Naive thymus-derived CD4-positive, alpha-beta T cell (primary cell): ENCODE measurements at regions of chr3 and their contacts with region 1.

Region 1: GRCh38 chr3:188914552-188914951 is 257.2 kb upstream of the TPRG1 start:
- DNase-seq: no peak
- ATAC-seq: peak; percentile 70
- H3K4me3 ChIP-seq: no peak overlapping the region
- H3K4me3 Mint-ChIP-seq: peak overlapping the region in 1 of 10 donors; percentile 41
- H3K27ac ChIP-seq: no peak overlapping the region
- H3K27ac Mint-ChIP-seq: peak overlapping the region in 2 of 9 donors; percentile 28 to 34
- H3K4me1 ChIP-seq: peaks cover 16 to 18% of the 10 kb centered on the region in 2 donors
- H3K4me1 Mint-ChIP-seq: peaks cover 21 to 42% (median 32%) of the 10 kb centered on the region in 7 donors
- H3K27me3 ChIP-seq: no peaks in the 10 kb centered on the region
- H3K27me3 Mint-ChIP-seq: no peaks in the 10 kb centered on the region

Region 2: DNA sequence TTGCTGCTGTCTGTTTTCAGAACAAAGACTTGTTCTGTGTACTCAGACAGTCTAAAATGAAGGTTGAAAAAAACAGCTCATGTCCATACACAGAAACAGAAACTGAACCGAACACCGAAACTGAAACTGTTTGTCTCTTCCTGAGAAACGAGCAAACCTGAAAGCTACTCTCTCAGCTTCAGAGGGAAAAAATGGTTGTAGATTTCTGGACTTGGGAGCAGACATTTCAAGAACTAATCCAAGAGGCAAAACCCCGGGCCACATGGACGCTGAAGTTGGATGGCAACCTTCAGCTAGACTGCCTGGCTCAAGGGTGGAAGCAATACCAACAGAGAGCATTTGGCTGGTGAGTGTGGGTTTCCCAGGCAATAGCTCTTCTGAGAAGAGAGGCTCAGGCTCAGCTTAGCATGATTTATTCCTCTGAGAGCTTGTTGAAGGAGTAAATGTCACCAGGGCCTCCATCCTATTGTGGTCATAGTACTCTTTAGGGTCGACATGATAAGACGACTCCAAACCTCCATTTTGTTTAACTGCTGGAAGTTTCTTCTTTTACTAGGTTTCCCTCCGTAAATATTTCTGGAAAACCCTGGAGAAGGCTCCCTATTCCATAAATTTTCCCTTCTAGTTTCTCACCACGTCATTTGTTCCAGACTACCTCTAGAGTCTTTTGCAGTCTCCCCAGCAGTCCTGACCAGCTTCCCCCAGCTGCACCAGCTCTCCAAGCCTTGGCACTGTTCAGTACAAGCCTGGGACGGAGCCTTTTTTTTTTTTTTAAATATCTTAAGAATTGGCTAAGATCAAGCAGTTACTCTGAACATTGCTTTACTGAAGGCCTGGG is 1546.1 kb before region 1 on chr3 and contains the start of gene RTP4:
- CTCF ChIA-PET with region 1: no interaction called
- POLR2A ChIA-PET with region 1: no interaction called
- intact Hi-C with region 1: loop called in 1 of 2 experiments (anchors 5 kb)
- DNase-seq: peak in 8 of 9 donors; percentile 25 to 70 (median 55)
- ATAC-seq: peak; percentile 86
- H3K4me3 ChIP-seq: peak within 1 kb of the TSS; percentile 85
- H3K4me3 Mint-ChIP-seq: peak within 1 kb of the TSS; percentile 89 to 100 (median 98)
- H3K27ac ChIP-seq: peak within 1 kb of the TSS; percentile 78
- H3K27ac Mint-ChIP-seq: peak within 1 kb of the TSS; percentile 94 to 100 (median 98)
- H3K4me1 ChIP-seq: peaks cover 9 to 13% of the 10 kb centered on the region in 2 donors
- H3K4me1 Mint-ChIP-seq: peaks cover 22 to 42% (median 29%) of the 10 kb centered on the region in 7 donors
- H3K27me3 ChIP-seq: no peaks in the 10 kb centered on the region
- H3K27me3 Mint-ChIP-seq: no peaks in the 10 kb centered on the region
- total RNA-seq, gene RTP4: 1.6 to 23.1 (median 5.5) TPM

Region 3: DNA sequence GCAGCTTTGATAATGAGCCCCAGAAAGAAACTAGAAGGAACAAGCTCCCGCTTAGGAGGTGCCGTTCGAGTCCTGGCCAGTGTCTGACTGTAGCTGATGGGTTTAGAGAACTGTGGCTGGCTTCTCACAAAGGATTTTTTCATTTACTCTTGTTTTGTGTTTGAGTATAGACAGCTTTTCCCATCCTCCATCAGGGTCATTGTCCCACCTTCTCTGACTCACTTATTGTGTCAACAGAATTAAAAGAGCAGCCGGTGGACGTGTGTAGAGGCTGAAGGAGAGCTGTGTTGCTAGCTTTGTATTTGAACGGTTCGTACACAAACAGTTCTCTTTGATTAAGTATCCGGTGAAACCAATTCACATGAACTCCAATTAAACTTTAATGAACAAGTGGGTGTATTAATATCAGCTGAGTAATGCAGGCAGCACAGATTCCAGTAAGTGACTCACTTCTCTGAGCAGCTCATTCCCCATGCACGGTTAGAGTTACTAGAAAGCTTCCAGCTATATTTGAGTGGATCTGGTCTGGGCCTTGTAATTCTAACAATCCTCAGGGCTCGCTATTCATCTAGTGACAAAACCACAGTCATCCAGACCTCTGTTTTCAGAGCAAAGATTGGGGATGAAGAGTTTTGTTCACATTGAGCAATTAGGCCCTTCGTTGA is 619.6 kb before region 1 on chr3:
- CTCF ChIA-PET with region 1: no interaction called
- POLR2A ChIA-PET with region 1: no interaction called
- intact Hi-C with region 1: loop called in 1 of 2 experiments (anchors 10 kb)
- DNase-seq: no peak
- ATAC-seq: no peak
- H3K4me3 ChIP-seq: no peak overlapping the region
- H3K4me3 Mint-ChIP-seq: no peak overlapping the region
- H3K27ac ChIP-seq: no peak overlapping the region
- H3K27ac Mint-ChIP-seq: no peak overlapping the region
- H3K4me1 ChIP-seq: peaks cover 4 to 6% of the 10 kb centered on the region in 2 donors
- H3K4me1 Mint-ChIP-seq: peaks cover 8 to 62% (median 27%) of the 10 kb centered on the region in 7 donors
- H3K27me3 ChIP-seq: no peaks in the 10 kb centered on the region
- H3K27me3 Mint-ChIP-seq: no peaks in the 10 kb centered on the region

Region 4: GRCh38 chr3:188947401-188948280 is 33.1 kb after region 1 on chr3:
- CTCF ChIA-PET with region 1: interaction called, 3 read pairs
- POLR2A ChIA-PET with region 1: no interaction called
- intact Hi-C with region 1: loop called in 1 of 2 experiments (anchors 2 kb)
- DNase-seq: no peak
- ATAC-seq: no peak
- H3K4me3 ChIP-seq: peak overlapping the region; percentile 21
- H3K4me3 Mint-ChIP-seq: peak overlapping the region in 5 of 10 donors; percentile 14 to 61 (median 22)
- H3K27ac ChIP-seq: no peak overlapping the region
- H3K27ac Mint-ChIP-seq: no peak overlapping the region
- H3K4me1 ChIP-seq: no peaks in the 10 kb centered on the region
- H3K4me1 Mint-ChIP-seq: peaks cover 0 to 24% (median 4%) of the 10 kb centered on the region in 7 donors
- H3K27me3 ChIP-seq: no peaks in the 10 kb centered on the region
- H3K27me3 Mint-ChIP-seq: peaks cover 4 to 24% (median 6%) of the 10 kb centered on the region in 5 donors